ENCODE measurements at regions of chr6 and their contacts with region 1.

Region 1: DNA sequence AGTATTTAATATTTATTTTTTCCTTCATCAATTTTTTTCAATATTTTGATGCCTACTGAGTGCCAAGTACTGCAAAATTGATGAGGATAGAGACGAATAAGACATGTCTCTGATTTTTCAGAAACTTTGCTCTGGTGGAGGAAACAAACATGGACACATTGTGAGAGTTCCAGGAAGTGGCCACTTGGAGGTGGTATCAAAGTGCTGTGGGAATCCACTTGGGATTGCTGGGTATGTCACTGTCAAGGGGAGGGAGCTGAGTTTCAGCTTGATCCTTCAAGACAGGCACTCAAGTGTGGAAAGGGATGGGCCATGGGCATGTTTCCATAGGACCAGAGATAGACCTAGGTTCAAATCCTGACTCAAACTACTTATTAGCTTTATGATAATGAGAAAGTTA is 24.5 kb upstream of the ABCC10 start:
- DNase-seq: no peak
- H3K4me3 ChIP-seq: no peak overlapping the region
- H3K4me3 Mint-ChIP-seq: no peak overlapping the region
- H3K27ac ChIP-seq: no peak overlapping the region
- H3K27ac Mint-ChIP-seq: no peak overlapping the region
- H3K4me1 ChIP-seq: peaks cover 4% of the 10 kb centered on the region
- H3K4me1 Mint-ChIP-seq: peaks cover under 1 to 3% (median 2%) of the 10 kb centered on the region in 4 donors
- H3K27me3 ChIP-seq: no peaks in the 10 kb centered on the region
- H3K27me3 Mint-ChIP-seq: peaks cover 6 to 11% of the 10 kb centered on the region in 2 donors

Region 2: GRCh38 chr6:43228951-43229802 is 173.6 kb before region 1 on chr6 and contains the start of gene DNPH1:
- CTCF ChIA-PET with region 1: interaction called, 26 read pairs
- POLR2A ChIA-PET with region 1: no interaction called
- intact Hi-C with region 1: loop called (anchors 1 kb)
- DNase-seq: peak; percentile 71 to 84 (median 79)
- H3K4me3 ChIP-seq: peak within 1 kb of the TSS; percentile 11 to 69
- H3K4me3 Mint-ChIP-seq: peak within 1 kb of the TSS; percentile 88 to 96 (median 92)
- H3K27ac ChIP-seq: peak within 1 kb of the TSS; percentile 63
- H3K27ac Mint-ChIP-seq: peak within 1 kb of the TSS; percentile 94 to 97 (median 95)
- H3K4me1 ChIP-seq: peaks cover 49% of the 10 kb centered on the region
- H3K4me1 Mint-ChIP-seq: peaks cover 26 to 48% (median 34%) of the 10 kb centered on the region in 4 donors
- H3K27me3 ChIP-seq: no peaks in the 10 kb centered on the region
- H3K27me3 Mint-ChIP-seq: peaks cover 3 to 4% of the 10 kb centered on the region in 2 donors
- total RNA-seq, gene DNPH1: 32.8 to 34.8 TPM

Region 3: GRCh38 chr6:43308101-43308989 is 94.5 kb before region 1 on chr6 and contains the start of gene CRIP3:
- CTCF ChIA-PET with region 1: interaction called, 49 read pairs
- POLR2A ChIA-PET with region 1: interaction called, 6 read pairs
- intact Hi-C with region 1: loop called (anchors 1 kb)
- DNase-seq: peak; percentile 42 to 63 (median 46)
- H3K4me3 ChIP-seq: peak within 1 kb of the TSS; percentile 42 to 43
- H3K4me3 Mint-ChIP-seq: peak within 1 kb of the TSS; percentile 75 to 89 (median 84)
- H3K27ac ChIP-seq: no peak within 1 kb of the TSS
- H3K27ac Mint-ChIP-seq: peak within 1 kb of the TSS in 6 of 7 donors; percentile 17 to 88 (median 52)
- H3K4me1 ChIP-seq: peaks cover 14% of the 10 kb centered on the region
- H3K4me1 Mint-ChIP-seq: peaks cover 3 to 12% (median 8%) of the 10 kb centered on the region in 4 donors
- H3K27me3 ChIP-seq: no peaks in the 10 kb centered on the region
- H3K27me3 Mint-ChIP-seq: no peaks in the 10 kb centered on the region
- total RNA-seq, gene CRIP3: 1.9 to 3.0 TPM

Region 4: GRCh38 chr6:43361269-43361668 is 41.6 kb before region 1 on chr6:
- CTCF ChIA-PET with region 1: interaction called, 26 read pairs
- POLR2A ChIA-PET with region 1: no interaction called
- intact Hi-C with region 1: no loop called
- DNase-seq: no peak
- H3K4me3 ChIP-seq: no peak overlapping the region
- H3K4me3 Mint-ChIP-seq: no peak overlapping the region
- H3K27ac ChIP-seq: no peak overlapping the region
- H3K27ac Mint-ChIP-seq: no peak overlapping the region
- H3K4me1 ChIP-seq: peaks cover 8% of the 10 kb centered on the region
- H3K4me1 Mint-ChIP-seq: peaks cover 21 to 46% (median 35%) of the 10 kb centered on the region in 4 donors
- H3K27me3 ChIP-seq: no peaks in the 10 kb centered on the region
- H3K27me3 Mint-ChIP-seq: no peaks in the 10 kb centered on the region

Region 5: GRCh38 chr6:43391440-43392031 is 11.3 kb before region 1 on chr6:
- CTCF ChIA-PET with region 1: interaction called, 12 read pairs
- POLR2A ChIA-PET with region 1: interaction called, 4 read pairs
- intact Hi-C with region 1: no loop called
- DNase-seq: peak; percentile 44 to 73 (median 53)
- H3K4me3 ChIP-seq: peak overlapping the region in 1 of 2 donors; percentile 29
- H3K4me3 Mint-ChIP-seq: peak overlapping the region; percentile 12 to 92 (median 82)
- H3K27ac ChIP-seq: no peak overlapping the region
- H3K27ac Mint-ChIP-seq: peak overlapping the region; percentile 29 to 88 (median 65)
- H3K4me1 ChIP-seq: peaks cover 30% of the 10 kb centered on the region
- H3K4me1 Mint-ChIP-seq: peaks cover 24 to 48% (median 34%) of the 10 kb centered on the region in 4 donors
- H3K27me3 ChIP-seq: no peaks in the 10 kb centered on the region
- H3K27me3 Mint-ChIP-seq: peaks cover 0 to 8% of the 10 kb centered on the region in 2 donors